K562 (cell line): ENCODE measurements at regions of chr9 and their contacts with region 1.

Region 1: DNA sequence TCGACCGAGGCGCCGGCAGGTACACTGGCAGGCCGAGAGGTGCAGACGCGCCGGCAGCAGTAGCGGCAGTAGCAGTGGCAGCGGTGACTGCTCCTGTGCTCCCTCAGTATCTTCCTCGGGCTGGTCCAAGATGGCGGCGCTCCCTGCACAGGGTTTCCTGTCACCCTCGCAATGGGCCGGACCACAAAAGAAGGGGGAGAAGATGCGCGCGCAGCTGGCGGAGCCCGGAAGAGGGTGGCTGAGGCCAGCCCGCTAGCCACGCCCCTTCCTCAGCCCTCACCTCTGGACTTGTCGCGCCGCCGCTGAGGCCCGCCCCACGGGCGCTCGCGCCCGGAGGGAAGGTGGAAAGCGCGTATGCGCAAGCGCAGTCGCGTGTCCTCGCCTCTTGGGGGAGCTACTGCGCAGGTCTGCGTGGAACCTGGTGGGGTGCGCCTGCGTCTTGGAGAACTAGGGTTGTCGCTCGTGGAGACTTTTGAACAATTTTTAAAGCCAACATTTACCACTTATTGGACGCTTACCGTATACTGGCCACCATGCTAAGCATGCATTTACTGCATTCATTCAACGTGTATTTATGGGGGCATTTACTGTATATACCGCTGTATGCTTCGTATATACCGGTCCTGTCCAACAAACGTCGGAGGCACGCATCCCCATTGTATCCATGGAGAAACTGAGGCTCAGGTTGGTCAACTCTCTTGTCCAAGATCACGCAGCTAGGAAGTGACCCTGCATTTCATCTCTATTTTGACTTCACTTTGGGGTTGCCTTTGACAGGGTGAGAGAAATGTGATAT is at the start of gene RAB14:
- DNase-seq: peak; percentile 99 to 100 (median 99)
- ATAC-seq: peak; percentile 88
- H3K4me3 ChIP-seq: peak within 1 kb of the TSS; percentile 87
- H3K27ac ChIP-seq: peak within 1 kb of the TSS; percentile 87
- H3K4me1 ChIP-seq: peaks cover 14 to 15% of the 10 kb centered on the region in 2 experiments; a peak in 3 of 5 replicates
- H3K27me3 ChIP-seq: no peaks in the 10 kb centered on the region
- CTCF ChIP-seq: peak; percentile 72 to 87 (median 75)
- EP300 ChIP-seq: no peak
- POLR2A ChIP-seq: peak; percentile 83
- RAD21 ChIP-seq: 0 out of 4 replicates have a peak, but pooled peaks of 1 of the 2 experiments have one; percentile 10
- polyA plus RNA-seq, gene RAB14: 20.2 to 20.9 TPM

Region 2: DNA sequence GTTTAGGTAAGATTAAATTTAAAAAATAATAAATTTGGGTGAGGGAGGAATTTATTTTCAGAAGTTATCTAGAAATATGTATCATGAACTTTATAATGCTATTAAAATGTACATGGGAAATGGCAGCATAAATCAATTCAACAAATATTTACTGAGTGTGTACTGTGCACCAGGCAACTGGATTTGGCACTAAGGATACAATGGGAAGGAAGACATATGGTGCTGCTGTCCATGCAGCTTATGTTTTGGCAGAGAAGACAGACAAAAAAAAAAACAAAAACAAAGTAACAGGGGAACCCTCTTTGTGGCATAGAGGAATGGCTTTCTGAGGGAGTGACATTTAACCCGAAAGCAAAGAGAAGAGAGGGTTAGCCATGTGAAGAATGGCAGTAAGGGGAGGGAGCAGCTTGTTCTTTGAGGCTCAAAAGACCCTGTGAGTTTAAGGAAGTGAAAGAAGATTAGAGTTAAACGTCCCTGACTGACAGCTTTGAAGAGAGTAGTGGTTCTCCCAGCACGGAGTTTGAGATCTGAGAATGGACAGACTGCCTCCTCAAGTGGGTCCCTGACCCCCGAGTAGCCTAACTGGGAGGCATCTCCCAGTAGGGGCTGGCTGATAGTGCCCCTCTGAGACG is 103.3 kb before region 1 on chr9:
- CTCF ChIA-PET with region 1: no interaction called
- POLR2A ChIA-PET with region 1: no interaction called
- in situ Hi-C with region 1: no loop called
- intact Hi-C with region 1: no loop called
- DNase-seq: no peak
- ATAC-seq: no peak
- H3K4me3 ChIP-seq: no peak overlapping the region
- H3K27ac ChIP-seq: no peak overlapping the region
- H3K4me1 ChIP-seq: no peaks in the 10 kb centered on the region
- H3K27me3 ChIP-seq: no peaks in the 10 kb centered on the region
- CTCF ChIP-seq: no peak
- EP300 ChIP-seq: no peak
- POLR2A ChIP-seq: no peak
- RAD21 ChIP-seq: no peak

Region 3: GRCh38 chr9:121185178-121185745 is 16.7 kb before region 1 on chr9:
- CTCF ChIA-PET with region 1: no interaction called
- POLR2A ChIA-PET with region 1: interaction called, 10 read pairs
- in situ Hi-C with region 1: no loop called
- intact Hi-C with region 1: no loop called
- DNase-seq: no peak
- ATAC-seq: no peak
- H3K4me3 ChIP-seq: no peak overlapping the region
- H3K27ac ChIP-seq: no peak overlapping the region
- H3K4me1 ChIP-seq: no peaks in the 10 kb centered on the region; a peak in 3 of 5 replicates
- H3K27me3 ChIP-seq: no peaks in the 10 kb centered on the region
- CTCF ChIP-seq: no peak
- EP300 ChIP-seq: no peak
- POLR2A ChIP-seq: no peak
- RAD21 ChIP-seq: no peak

Region 4: GRCh38 chr9:121219530-121219929 is 17.6 kb after region 1 on chr9:
- CTCF ChIA-PET with region 1: no interaction called
- POLR2A ChIA-PET with region 1: no interaction called
- in situ Hi-C with region 1: no loop called
- intact Hi-C with region 1: no loop called
- DNase-seq: no peak
- ATAC-seq: no peak
- H3K4me3 ChIP-seq: no peak overlapping the region
- H3K27ac ChIP-seq: no peak overlapping the region
- H3K4me1 ChIP-seq: peaks cover 0 to 21% of the 10 kb centered on the region in 2 experiments; a peak in 3 of 5 replicates
- H3K27me3 ChIP-seq: no peaks in the 10 kb centered on the region
- CTCF ChIP-seq: no peak
- EP300 ChIP-seq: no peak
- POLR2A ChIP-seq: no peak
- RAD21 ChIP-seq: no peak

Region 5: GRCh38 chr9:121242219-121242958 is 40.5 kb after region 1 on chr9:
- CTCF ChIA-PET with region 1: no interaction called
- POLR2A ChIA-PET with region 1: no interaction called
- in situ Hi-C with region 1: no loop called
- intact Hi-C with region 1: loop called (anchors 1 kb)
- DNase-seq: peak in 1 of 4 experiments; percentile 23
- ATAC-seq: peak; percentile 81
- H3K4me3 ChIP-seq: no peak overlapping the region
- H3K27ac ChIP-seq: no peak overlapping the region
- H3K4me1 ChIP-seq: peaks cover 9% of the 10 kb centered on the region in 2 experiments; a peak in 4 of 5 replicates
- H3K27me3 ChIP-seq: no peaks in the 10 kb centered on the region
- CTCF ChIP-seq: no peak
- EP300 ChIP-seq: no peak
- POLR2A ChIP-seq: no peak
- RAD21 ChIP-seq: no peak